HCT116 (cell line): ENCODE measurements at regions of chr1 and their contacts with region 1.

Region 1: GRCh38 chr1:225977937-225978748 is 21.0 kb downstream of the SDE2 start:
- DNase-seq: no peak
- ATAC-seq: no peak
- H3K4me3 ChIP-seq: no peak overlapping the region
- H3K27ac ChIP-seq: no peak overlapping the region
- H3K4me1 ChIP-seq: no peaks in the 10 kb centered on the region
- H3K27me3 ChIP-seq: no peaks in the 10 kb centered on the region
- CTCF ChIP-seq: no peak
- POLR2A ChIP-seq: no peak
- RAD21 ChIP-seq: peak; percentile 23; the same call in 1 of the 2 replicates

Region 2: DNA sequence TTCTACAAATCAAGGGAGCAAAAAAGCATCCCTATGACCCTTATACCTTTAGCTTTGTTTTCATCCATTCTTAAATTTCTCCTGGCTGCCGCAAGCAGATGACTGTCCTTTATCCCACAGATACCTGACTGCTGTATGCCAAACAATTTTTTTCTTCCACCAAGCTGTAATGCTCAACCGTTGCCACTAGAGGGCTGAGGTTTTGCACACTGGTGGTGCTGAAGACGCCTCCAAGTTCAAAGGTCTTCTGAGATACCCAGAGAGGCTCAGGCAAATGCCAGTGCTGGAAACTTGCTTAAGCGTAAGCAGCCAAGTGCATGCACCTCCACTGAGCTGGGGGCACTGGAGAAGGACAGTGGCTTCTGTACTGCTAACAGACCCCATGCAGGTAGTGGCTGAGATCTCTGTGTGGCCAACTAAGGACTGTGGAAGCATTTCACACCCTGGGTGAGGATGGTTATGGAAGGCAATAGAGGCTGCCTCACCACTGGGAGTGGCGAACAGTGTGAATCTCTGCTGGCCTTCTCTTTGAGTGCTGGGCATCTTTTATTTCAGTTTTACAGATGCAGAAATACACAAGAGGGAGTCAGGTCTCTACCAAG is 1333.5 kb before region 1 on chr1:
- CTCF ChIA-PET with region 1: no interaction called
- POLR2A ChIA-PET with region 1: no interaction called
- RAD21 ChIA-PET with region 1: no interaction called
- intact Hi-C with region 1: loop called (anchors 10 kb)
- DNase-seq: peak; percentile 47
- ATAC-seq: peak; percentile 85
- H3K4me3 ChIP-seq: no peak overlapping the region
- H3K27ac ChIP-seq: no peak overlapping the region
- H3K4me1 ChIP-seq: no peaks in the 10 kb centered on the region
- H3K27me3 ChIP-seq: no peaks in the 10 kb centered on the region
- CTCF ChIP-seq: peak; percentile 83 to 87 (median 85)
- POLR2A ChIP-seq: no peak
- RAD21 ChIP-seq: peak; percentile 76

Region 3: GRCh38 chr1:225474986-225475820 is 502.9 kb before region 1 on chr1:
- CTCF ChIA-PET with region 1: interaction called, 8 read pairs
- POLR2A ChIA-PET with region 1: no interaction called
- RAD21 ChIA-PET with region 1: interaction called in 1 of 2 experiments, 4 read pairs
- intact Hi-C with region 1: loop called (anchors 1 kb)
- DNase-seq: peak; percentile 40
- ATAC-seq: peak; percentile 92
- H3K4me3 ChIP-seq: no peak overlapping the region
- H3K27ac ChIP-seq: no peak overlapping the region; the same call in 1 of the 2 replicates
- H3K4me1 ChIP-seq: peaks cover 3 to 10% of the 10 kb centered on the region in 2 experiments; a peak in 3 of 4 replicates
- H3K27me3 ChIP-seq: no peaks in the 10 kb centered on the region
- CTCF ChIP-seq: peak; percentile 100
- POLR2A ChIP-seq: no peak
- RAD21 ChIP-seq: peak; percentile 100

Region 4: DNA sequence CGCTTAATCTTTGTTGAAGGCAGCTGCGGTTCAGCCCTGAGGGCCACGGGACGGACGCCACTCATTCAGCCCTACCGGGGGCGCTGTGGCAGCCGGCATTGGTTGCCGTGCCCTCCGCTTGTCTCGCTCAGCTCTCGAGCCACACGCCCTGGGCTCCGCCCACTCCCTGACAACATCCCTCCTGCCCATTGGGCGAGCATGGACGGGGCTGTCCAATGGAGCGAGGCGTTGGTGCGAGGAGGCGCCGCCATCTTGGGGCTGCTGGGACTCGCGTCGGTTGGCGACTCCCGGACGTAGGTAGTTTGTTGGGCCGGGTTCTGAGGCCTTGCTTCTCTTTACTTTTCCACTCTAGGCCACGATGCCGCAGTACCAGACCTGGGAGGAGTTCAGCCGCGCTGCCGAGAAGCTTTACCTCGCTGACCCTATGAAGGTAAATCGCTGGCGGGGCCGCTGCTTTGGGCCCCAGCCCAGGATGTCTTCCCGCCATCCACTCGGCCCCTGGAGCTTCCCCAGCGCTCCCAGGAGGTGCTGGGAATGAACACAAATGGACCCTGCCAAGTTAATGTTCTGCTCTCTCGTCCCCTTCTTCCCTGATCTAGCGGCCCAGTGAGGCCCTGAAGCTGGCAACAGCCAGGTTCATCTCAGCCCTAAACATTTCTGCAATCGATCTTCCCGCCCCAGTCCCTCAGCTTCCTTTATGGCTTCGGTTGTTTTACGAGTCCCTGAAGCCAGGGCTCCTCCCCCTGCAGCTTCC is 200.4 kb before region 1 on chr1 and contains the start of gene SRP9:
- CTCF ChIA-PET with region 1: no interaction called
- POLR2A ChIA-PET with region 1: no interaction called
- RAD21 ChIA-PET with region 1: no interaction called
- intact Hi-C with region 1: loop called (anchors 2 kb)
- DNase-seq: peak; percentile 97
- ATAC-seq: peak; percentile 96
- H3K4me3 ChIP-seq: peak within 1 kb of the TSS; percentile 87 to 95
- H3K27ac ChIP-seq: peak within 1 kb of the TSS; percentile 82
- H3K4me1 ChIP-seq: peaks cover 8 to 17% of the 10 kb centered on the region in 2 experiments; a peak in 3 of 4 replicates
- H3K27me3 ChIP-seq: no peaks in the 10 kb centered on the region
- CTCF ChIP-seq: peak; percentile 83 to 89 (median 88)
- POLR2A ChIP-seq: peak; percentile 50
- RAD21 ChIP-seq: peak; percentile 81
- total RNA-seq, gene SRP9: 220 TPM

Region 5: GRCh38 chr1:225851805-225852204 is 126.3 kb before region 1 on chr1:
- CTCF ChIA-PET with region 1: no interaction called
- POLR2A ChIA-PET with region 1: no interaction called
- RAD21 ChIA-PET with region 1: no interaction called
- intact Hi-C with region 1: loop called (anchors 10 kb)
- DNase-seq: no peak
- ATAC-seq: no peak
- H3K4me3 ChIP-seq: no peak overlapping the region
- H3K27ac ChIP-seq: no peak overlapping the region
- H3K4me1 ChIP-seq: no peaks in the 10 kb centered on the region
- H3K27me3 ChIP-seq: no peaks in the 10 kb centered on the region
- CTCF ChIP-seq: no peak
- POLR2A ChIP-seq: no peak
- RAD21 ChIP-seq: no peak

Region 6: DNA sequence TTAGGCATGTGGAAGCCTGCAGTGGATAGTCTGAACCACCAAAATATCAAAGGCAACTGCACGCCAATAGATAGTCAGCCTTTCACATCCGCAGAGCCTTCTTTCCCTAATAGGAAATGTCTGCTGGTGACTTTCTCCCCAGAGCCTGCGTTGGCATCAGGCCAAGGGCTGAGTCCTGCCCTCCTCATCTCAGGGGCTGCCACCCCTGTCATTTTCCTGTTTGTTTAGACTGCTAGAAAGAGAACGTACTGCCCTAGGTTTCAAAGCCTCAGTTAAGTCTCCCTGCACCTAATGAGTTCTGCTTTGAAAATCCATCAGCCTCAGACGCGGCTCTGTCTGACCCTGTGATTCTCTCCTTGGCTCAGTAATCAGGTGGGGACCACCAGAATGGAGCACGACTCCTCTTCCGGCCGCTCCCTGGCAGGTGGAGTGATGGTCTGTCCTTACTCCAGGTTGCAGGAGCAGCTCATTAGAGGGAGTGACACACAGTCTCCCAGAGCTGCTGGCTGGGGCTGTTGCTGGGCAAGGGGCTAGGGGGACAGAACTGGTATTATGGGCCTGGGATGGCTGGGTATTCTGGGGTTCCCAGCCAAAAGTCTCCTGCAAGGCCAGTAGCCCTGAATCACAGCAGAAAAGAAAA is 597.7 kb after region 1 on chr1:
- CTCF ChIA-PET with region 1: no interaction called
- POLR2A ChIA-PET with region 1: no interaction called
- RAD21 ChIA-PET with region 1: no interaction called
- intact Hi-C with region 1: no loop called
- DNase-seq: no peak
- ATAC-seq: no peak
- H3K4me3 ChIP-seq: no peak overlapping the region
- H3K27ac ChIP-seq: no peak overlapping the region
- H3K4me1 ChIP-seq: no peaks in the 10 kb centered on the region
- H3K27me3 ChIP-seq: no peaks in the 10 kb centered on the region
- CTCF ChIP-seq: no peak
- POLR2A ChIP-seq: no peak
- RAD21 ChIP-seq: no peak